Activated naive CD4-positive, alpha-beta T cell treated with anti-CD3 and anti-CD28 coated beads for 36 hours (primary cell): ENCODE measurements at regions of chr20 and their contacts with region 1.

Region 1: DNA sequence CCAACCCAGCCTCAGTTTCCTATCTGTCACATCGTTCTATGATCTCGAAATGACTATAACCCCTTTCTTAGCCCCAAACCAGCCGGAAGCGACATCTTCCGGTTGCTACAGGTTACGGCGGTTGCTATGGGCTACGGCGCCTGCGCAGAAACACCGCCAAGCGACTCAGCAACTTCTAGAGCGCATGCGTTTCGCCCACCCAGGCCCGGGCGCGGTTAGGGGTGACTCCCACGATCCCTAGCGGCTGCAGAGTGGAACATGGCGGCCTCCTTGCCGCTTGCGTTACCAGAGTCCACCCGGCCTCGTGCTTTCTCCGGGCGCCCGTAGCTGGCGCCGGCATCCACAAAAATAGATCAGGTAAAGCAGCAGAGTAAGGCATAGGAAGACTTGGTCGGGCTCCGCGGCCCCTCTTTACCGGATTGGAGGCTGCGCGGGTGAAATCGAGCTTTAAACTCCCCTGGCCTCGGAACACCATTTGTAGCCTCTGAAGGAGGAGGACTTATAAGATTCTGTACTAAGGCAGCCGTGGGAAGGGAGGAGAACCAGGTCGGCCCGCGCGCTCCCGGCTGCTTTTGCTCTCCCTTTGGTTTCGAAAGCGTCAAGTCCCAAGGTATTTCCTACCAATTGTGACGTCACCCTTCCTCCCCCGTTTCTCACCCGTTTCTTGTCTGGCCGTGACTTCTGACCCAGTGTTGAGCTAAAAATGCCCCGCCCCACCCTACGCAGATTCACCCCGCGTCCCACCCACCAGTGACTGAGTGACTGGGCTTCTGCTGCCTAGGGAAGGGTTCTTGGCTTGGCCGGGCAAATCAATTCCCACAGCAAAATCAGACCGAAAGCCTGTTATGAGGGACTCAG is 3.5 kb downstream of the SDCBP2 start:
- DNase-seq: peak; percentile 99
- H3K4me3 Mint-ChIP-seq: no peak overlapping the region
- H3K27ac Mint-ChIP-seq: no peak overlapping the region
- H3K4me1 Mint-ChIP-seq: peaks cover 28% of the 10 kb centered on the region
- H3K27me3 Mint-ChIP-seq: no peaks in the 10 kb centered on the region

Region 2: DNA sequence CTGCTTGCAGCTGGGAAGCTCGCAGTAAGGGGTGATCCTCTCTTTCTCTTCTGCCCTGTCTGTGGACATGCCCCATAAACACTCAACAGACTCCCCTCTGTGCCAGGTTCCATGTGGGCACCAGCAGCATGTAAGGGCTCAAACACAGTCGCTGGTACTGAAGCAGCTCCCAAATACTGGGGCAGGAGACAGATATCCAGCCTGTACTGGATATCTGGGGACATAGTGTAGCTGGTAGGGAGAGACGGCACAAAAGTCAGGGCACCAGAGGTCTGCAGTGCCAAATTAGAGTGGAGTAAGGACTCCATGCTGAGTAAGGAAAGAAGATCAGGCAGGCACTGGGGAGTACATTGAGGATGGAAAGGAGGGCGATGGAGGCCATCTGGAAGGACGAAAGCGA is 275.0 kb before region 1 on chr20:
- CTCF ChIA-PET with region 1: no interaction called
- intact Hi-C with region 1: no loop called
- DNase-seq: no peak
- H3K4me3 Mint-ChIP-seq: no peak overlapping the region
- H3K27ac Mint-ChIP-seq: no peak overlapping the region
- H3K4me1 Mint-ChIP-seq: no peaks in the 10 kb centered on the region
- H3K27me3 Mint-ChIP-seq: no peaks in the 10 kb centered on the region

Region 3: GRCh38 chr20:1225783-1226654 is 99.4 kb before region 1 on chr20 and contains the start of gene RAD21L1:
- CTCF ChIA-PET with region 1: no interaction called
- intact Hi-C with region 1: loop called (anchors 1 kb)
- DNase-seq: peak; percentile 88
- H3K4me3 Mint-ChIP-seq: peak within 1 kb of the TSS; percentile 83
- H3K27ac Mint-ChIP-seq: no peak within 1 kb of the TSS
- H3K4me1 Mint-ChIP-seq: peaks cover 10% of the 10 kb centered on the region
- H3K27me3 Mint-ChIP-seq: peaks cover 6% of the 10 kb centered on the region
- total RNA-seq, gene RAD21L1: not detected

Region 4: DNA sequence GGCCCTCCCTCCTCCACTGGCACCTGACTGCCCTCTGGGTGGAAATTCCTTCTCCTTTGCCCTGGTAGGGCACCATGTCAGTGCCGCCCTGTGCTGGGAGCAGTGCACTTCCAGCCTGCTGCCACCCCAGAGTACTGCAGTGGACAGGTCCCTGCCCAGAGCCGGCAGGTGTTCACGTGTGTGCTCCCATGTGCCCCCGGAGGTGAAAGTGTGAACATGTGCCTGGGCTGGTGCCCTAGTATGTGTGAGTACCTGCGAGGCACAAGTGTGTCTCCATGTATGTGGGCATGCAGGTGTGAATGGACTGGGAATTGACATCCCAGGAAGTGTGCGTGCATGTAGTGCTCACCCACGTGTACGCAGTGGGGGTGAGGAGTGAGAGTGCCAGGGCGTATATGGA is 25.9 kb before region 1 on chr20:
- CTCF ChIA-PET with region 1: no interaction called
- intact Hi-C with region 1: no loop called
- DNase-seq: peak; percentile 52
- H3K4me3 Mint-ChIP-seq: no peak overlapping the region
- H3K27ac Mint-ChIP-seq: no peak overlapping the region
- H3K4me1 Mint-ChIP-seq: peaks cover 21% of the 10 kb centered on the region
- H3K27me3 Mint-ChIP-seq: no peaks in the 10 kb centered on the region

Region 5: DNA sequence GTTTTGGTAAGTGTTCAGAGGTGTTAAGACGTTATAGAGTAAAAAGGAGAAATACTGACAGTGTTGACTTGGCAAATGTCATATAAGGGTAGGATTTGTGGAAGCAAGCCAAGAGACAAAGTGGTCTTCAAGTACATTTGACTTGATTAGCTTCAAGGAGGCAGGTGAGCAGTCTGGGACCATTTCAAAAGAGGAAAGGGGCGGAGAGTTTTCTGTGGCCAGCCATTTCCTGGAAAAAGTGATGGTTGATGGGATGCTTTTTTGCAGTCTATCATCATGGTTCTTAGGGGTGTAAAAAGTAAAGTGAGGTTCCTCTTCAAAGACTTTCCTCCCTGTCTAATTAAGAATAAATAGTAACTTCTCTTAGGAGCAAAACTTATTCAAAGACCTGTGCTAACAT is 38.7 kb after region 1 on chr20:
- CTCF ChIA-PET with region 1: interaction called, 3 read pairs
- intact Hi-C with region 1: loop called (anchors 1 kb)
- DNase-seq: peak; percentile 68
- H3K4me3 Mint-ChIP-seq: no peak overlapping the region
- H3K27ac Mint-ChIP-seq: peak overlapping the region; percentile 43
- H3K4me1 Mint-ChIP-seq: peaks cover 71% of the 10 kb centered on the region
- H3K27me3 Mint-ChIP-seq: no peaks in the 10 kb centered on the region

Region 6: GRCh38 chr20:1392823-1393506 is 67.6 kb after region 1 on chr20 and contains the start of gene FKBP1A:
- CTCF ChIA-PET with region 1: interaction called, 3 read pairs
- intact Hi-C with region 1: loop called (anchors 1 kb)
- DNase-seq: peak; percentile 92
- H3K4me3 Mint-ChIP-seq: peak within 1 kb of the TSS; percentile 91
- H3K27ac Mint-ChIP-seq: peak within 1 kb of the TSS; percentile 88
- H3K4me1 Mint-ChIP-seq: peaks cover 54% of the 10 kb centered on the region
- H3K27me3 Mint-ChIP-seq: no peaks in the 10 kb centered on the region
- total RNA-seq, gene FKBP1A: 232 to 237 TPM

Region 7: GRCh38 chr20:1466211-1467081 is 141.0 kb after region 1 on chr20 and contains the start of gene NSFL1C:
- CTCF ChIA-PET with region 1: no interaction called
- intact Hi-C with region 1: loop called (anchors 1 kb)
- DNase-seq: peak; percentile 97
- H3K4me3 Mint-ChIP-seq: peak within 1 kb of the TSS; percentile 80
- H3K27ac Mint-ChIP-seq: peak within 1 kb of the TSS; percentile 71
- H3K4me1 Mint-ChIP-seq: peaks cover 44% of the 10 kb centered on the region
- H3K27me3 Mint-ChIP-seq: peaks cover 6% of the 10 kb centered on the region
- total RNA-seq, gene NSFL1C: 80.4 to 84.1 TPM